Heart left ventricle (tissue), 16 donors: ENCODE measurements at regions of chr17 and their contacts with region 1.

Region 1: GRCh38 chr17:67475236-67475937 is 98.3 kb downstream of the PITPNC1 start:
- DNase-seq: peak; percentile 74 to 81 (median 79)
- ATAC-seq: peak; percentile 62 to 82 (median 72)
- H3K4me3 ChIP-seq: peak overlapping the region in 1 of 12 donors; percentile 2
- H3K27ac ChIP-seq: peak overlapping the region; percentile 60 to 87 (median 70)
- H3K4me1 ChIP-seq: peaks cover 0 to 56% (median 21%) of the 10 kb centered on the region in 12 donors
- H3K27me3 ChIP-seq: no peaks in the 10 kb centered on the region
- CTCF ChIP-seq: peak; percentile 70 to 89 (median 84)
- POLR2A ChIP-seq: no peak

Region 2: DNA sequence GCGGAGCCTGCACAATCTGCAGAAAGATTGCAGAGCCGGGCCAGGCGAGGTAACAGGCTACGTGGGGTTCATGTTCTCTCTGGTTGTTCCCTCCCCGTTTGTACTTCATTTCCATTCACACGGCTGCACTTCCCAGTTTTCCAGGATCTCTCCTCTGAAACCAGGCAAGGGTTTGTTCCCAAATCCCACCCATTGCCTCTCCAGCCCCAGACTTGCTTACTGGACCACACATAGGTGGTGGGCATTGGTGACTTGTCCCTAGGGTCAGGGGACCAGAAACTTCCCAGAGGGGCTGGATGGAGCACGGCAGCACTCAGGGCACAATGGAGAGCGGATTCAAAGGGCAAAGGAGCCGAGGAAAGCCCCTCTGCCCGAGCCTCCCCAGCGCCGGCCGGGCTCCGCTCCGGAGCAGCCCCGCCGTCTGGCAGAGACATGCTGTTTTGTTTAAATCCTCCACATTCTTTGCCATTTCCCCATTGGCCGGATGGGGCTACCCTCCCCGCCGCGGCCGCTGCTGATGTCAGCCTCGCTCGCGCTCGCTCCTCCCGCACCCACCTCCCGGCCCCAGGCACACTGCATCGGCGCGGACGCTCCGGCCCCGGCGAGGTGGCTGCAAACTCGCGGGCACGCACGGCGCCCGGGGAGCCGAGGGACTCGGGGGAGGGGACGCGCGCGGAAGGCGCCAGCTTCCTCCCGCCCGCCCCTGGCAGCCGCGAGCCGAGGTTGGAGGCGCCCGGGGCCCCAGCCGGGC is 98.5 kb before region 1 on chr17 and contains the start of gene PITPNC1:
- intact Hi-C with region 1: loop called (anchors 1 to 5 kb)
- DNase-seq: peak; percentile 88 to 94 (median 89)
- ATAC-seq: peak; percentile 69 to 89 (median 82)
- H3K4me3 ChIP-seq: peak within 1 kb of the TSS; percentile 62 to 96 (median 88)
- H3K27ac ChIP-seq: peak within 1 kb of the TSS; percentile 88 to 97 (median 95)
- H3K4me1 ChIP-seq: peaks cover 0 to 43% (median 16%) of the 10 kb centered on the region in 12 donors
- H3K27me3 ChIP-seq: no peaks in the 10 kb centered on the region
- CTCF ChIP-seq: peak in 3 of 12 donors; percentile 10 to 19 (median 15)
- POLR2A ChIP-seq: peak; percentile 31 to 84
- total RNA-seq, gene PITPNC1: 8.4 to 20.8 (median 11.3) TPM

Region 3: DNA sequence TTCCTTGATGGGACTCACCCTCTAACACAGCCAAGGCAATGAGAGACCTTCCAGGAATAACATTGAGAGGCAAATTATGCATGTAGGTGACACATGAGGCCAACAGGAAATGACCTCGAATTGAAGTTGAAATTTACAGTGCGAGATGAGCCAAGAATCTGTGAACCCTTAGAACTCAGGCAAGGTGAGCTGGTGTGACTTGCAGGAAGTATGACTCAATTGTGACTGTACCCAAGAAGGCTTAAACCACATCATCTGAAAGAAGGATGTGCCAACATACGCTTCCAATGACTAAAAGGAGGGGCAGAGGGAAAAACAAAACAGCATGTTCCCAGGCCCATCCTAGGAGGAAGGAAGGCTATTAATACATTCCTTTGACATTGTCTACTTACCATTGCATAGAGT is 53.5 kb before region 1 on chr17:
- intact Hi-C with region 1: loop called in 1 of 10 experiments (anchors 5 kb)
- DNase-seq: no peak
- ATAC-seq: peak; percentile 85 to 93 (median 90)
- H3K4me3 ChIP-seq: no peak overlapping the region
- H3K27ac ChIP-seq: peak overlapping the region; percentile 16 to 83 (median 72)
- H3K4me1 ChIP-seq: peaks cover 0 to 50% (median 13%) of the 10 kb centered on the region in 12 donors
- H3K27me3 ChIP-seq: no peaks in the 10 kb centered on the region
- CTCF ChIP-seq: no peak
- POLR2A ChIP-seq: peak in 1 of 2 donors; percentile 14

Region 4: GRCh38 chr17:67431249-67432048 is 43.9 kb before region 1 on chr17:
- intact Hi-C with region 1: loop called in 4 of 10 experiments (anchors 5 kb)
- DNase-seq: no peak
- ATAC-seq: peak in 1 of 4 donors; percentile 8
- H3K4me3 ChIP-seq: no peak overlapping the region
- H3K27ac ChIP-seq: peak overlapping the region in 7 of 12 donors; percentile 10 to 58 (median 39)
- H3K4me1 ChIP-seq: peaks cover 0 to 57% (median 20%) of the 10 kb centered on the region in 12 donors
- H3K27me3 ChIP-seq: no peaks in the 10 kb centered on the region
- CTCF ChIP-seq: no peak
- POLR2A ChIP-seq: no peak

Region 5: DNA sequence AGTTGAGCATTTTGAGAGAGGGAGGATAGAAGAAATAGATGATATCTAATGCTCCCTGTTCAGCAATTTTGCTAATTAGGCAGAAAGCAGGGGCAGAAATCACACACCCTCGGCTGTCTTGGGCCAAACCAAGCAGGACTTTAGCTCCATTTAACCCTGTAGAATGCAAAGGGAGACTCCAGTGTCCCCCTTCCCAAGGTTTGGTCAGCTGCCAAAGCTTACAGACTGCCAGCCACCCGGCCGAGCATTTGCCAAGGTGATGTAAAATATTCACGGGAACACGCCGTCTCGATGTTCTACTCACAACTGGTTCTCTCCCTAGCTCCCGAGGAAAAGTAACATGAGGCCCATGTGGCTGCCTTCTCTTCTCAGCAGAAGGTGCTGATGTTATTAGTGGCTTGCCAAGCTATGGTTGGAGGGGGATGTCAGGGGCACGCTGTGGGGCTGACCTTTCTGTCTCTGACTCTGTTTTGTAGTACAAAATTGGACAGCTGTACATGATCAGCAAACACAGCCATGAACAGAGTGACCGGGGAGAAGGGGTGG is 57.0 kb after region 1 on chr17:
- intact Hi-C with region 1: no loop called
- DNase-seq: no peak
- ATAC-seq: no peak
- H3K4me3 ChIP-seq: no peak overlapping the region
- H3K27ac ChIP-seq: no peak overlapping the region
- H3K4me1 ChIP-seq: peaks cover 0 to 36% (median 16%) of the 10 kb centered on the region in 12 donors
- H3K27me3 ChIP-seq: no peaks in the 10 kb centered on the region
- CTCF ChIP-seq: no peak
- POLR2A ChIP-seq: no peak

Region 6: DNA sequence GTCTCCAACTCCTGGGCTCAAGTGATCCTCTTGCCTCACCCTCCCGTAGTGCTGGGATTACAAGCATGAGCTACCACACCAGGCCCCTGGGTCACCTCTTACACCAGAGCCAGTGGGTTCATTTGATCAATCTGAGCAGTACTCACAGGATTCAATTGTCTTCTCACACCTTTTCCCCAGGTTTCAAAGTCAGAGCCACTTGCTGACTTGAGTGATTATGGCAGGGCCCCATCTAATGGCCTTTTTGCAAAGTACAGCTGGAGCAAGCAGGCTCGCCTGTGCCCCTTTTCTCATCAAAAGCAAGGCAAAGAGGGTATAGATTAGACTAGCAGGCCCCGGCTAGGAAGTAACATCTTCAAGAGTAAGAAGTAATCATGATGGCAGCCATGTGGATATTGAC is 127.6 kb after region 1 on chr17:
- intact Hi-C with region 1: loop called in 2 of 10 experiments (anchors 5 to 10 kb)
- DNase-seq: no peak
- ATAC-seq: no peak
- H3K4me3 ChIP-seq: no peak overlapping the region
- H3K27ac ChIP-seq: no peak overlapping the region
- H3K4me1 ChIP-seq: peaks cover 0 to 42% (median 31%) of the 10 kb centered on the region in 12 donors
- H3K27me3 ChIP-seq: no peaks in the 10 kb centered on the region
- CTCF ChIP-seq: peak in 9 of 12 donors; percentile 12 to 29 (median 25)
- POLR2A ChIP-seq: no peak

Region 7: GRCh38 chr17:67629971-67630320 is 154.6 kb after region 1 on chr17:
- intact Hi-C with region 1: loop called in 1 of 10 experiments (anchors 10 kb)
- DNase-seq: no peak
- ATAC-seq: peak in 2 of 4 donors; percentile 49 to 54
- H3K4me3 ChIP-seq: no peak overlapping the region
- H3K27ac ChIP-seq: peak overlapping the region in 1 of 12 donors; percentile 29
- H3K4me1 ChIP-seq: peaks cover 0 to 23% (median 5%) of the 10 kb centered on the region in 12 donors
- H3K27me3 ChIP-seq: no peaks in the 10 kb centered on the region
- CTCF ChIP-seq: peak; percentile 17 to 57 (median 38)
- POLR2A ChIP-seq: no peak

Region 8: DNA sequence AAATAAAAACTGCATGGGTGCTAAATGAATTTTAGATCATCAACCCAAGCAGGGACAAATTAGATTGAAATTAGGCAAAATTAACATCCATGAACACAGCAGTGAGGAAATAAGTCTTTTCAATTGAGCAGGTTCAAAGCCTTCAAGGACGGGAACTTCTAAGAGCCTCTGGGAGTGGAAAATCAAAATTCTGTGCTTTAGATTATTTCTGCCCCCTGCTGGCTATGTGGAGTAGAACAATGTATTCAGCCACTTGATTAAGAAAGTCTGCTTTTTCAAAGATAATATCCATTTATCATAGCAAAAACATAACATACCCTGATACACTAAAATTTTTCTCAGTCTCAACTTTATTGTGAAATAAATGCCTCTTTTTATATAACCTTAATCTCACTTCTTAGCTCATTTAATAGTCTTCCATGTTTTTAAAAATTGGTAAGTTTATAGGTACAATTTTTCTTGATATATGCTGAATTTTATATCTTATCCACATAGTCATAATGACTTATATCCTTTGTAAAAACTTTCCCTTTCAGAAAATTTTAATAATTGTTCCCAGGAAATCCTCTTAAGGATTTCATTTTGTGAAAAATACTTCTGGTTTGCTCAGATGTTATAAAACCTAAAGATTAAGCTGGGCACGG is 214.3 kb after region 1 on chr17:
- intact Hi-C with region 1: loop called in 2 of 10 experiments (anchors 5 to 10 kb)
- DNase-seq: peak in 2 of 5 donors; percentile 25 to 41
- ATAC-seq: peak in 3 of 4 donors; percentile 52 to 66 (median 58)
- H3K4me3 ChIP-seq: no peak overlapping the region
- H3K27ac ChIP-seq: no peak overlapping the region
- H3K4me1 ChIP-seq: peaks cover 0 to 6% (median 0%) of the 10 kb centered on the region in 12 donors
- H3K27me3 ChIP-seq: no peaks in the 10 kb centered on the region
- CTCF ChIP-seq: peak; percentile 67 to 86 (median 82)
- POLR2A ChIP-seq: no peak